ENCODE measurements at regions of chr3 and their contacts with region 1.

Region 1: GRCh38 chr3:58217209-58217811 is 6.5 kb upstream of the DNASE1L3 start:
- DNase-seq: peak; percentile 72
- ATAC-seq: peak; percentile 89
- H3K4me3 Mint-ChIP-seq: no peak overlapping the region
- H3K27ac Mint-ChIP-seq: no peak overlapping the region
- H3K4me1 Mint-ChIP-seq: peaks cover 15% of the 10 kb centered on the region
- H3K27me3 Mint-ChIP-seq: peaks cover 10% of the 10 kb centered on the region

Region 2: GRCh38 chr3:58135712-58136543 is 81.4 kb before region 1 on chr3:
- CTCF ChIA-PET with region 1: no interaction called
- POLR2A ChIA-PET with region 1: no interaction called
- DNase-seq: no peak
- ATAC-seq: no peak
- H3K4me3 Mint-ChIP-seq: no peak overlapping the region
- H3K27ac Mint-ChIP-seq: no peak overlapping the region
- H3K4me1 Mint-ChIP-seq: no peaks in the 10 kb centered on the region
- H3K27me3 Mint-ChIP-seq: no peaks in the 10 kb centered on the region

Region 3: GRCh38 chr3:58177747-58178527 is 39.4 kb before region 1 on chr3:
- CTCF ChIA-PET with region 1: interaction called, 170 read pairs
- POLR2A ChIA-PET with region 1: no interaction called
- DNase-seq: peak; percentile 91
- ATAC-seq: peak; percentile 98
- H3K4me3 Mint-ChIP-seq: peak overlapping the region; percentile 60
- H3K27ac Mint-ChIP-seq: no peak overlapping the region
- H3K4me1 Mint-ChIP-seq: peaks cover 20% of the 10 kb centered on the region
- H3K27me3 Mint-ChIP-seq: peaks cover 2% of the 10 kb centered on the region

Region 4: GRCh38 chr3:58188173-58188564 is 29.1 kb before region 1 on chr3:
- CTCF ChIA-PET with region 1: interaction called, 170 read pairs
- POLR2A ChIA-PET with region 1: no interaction called
- DNase-seq: no peak
- ATAC-seq: no peak
- H3K4me3 Mint-ChIP-seq: no peak overlapping the region
- H3K27ac Mint-ChIP-seq: no peak overlapping the region
- H3K4me1 Mint-ChIP-seq: peaks cover 2% of the 10 kb centered on the region
- H3K27me3 Mint-ChIP-seq: no peaks in the 10 kb centered on the region

Region 5: DNA sequence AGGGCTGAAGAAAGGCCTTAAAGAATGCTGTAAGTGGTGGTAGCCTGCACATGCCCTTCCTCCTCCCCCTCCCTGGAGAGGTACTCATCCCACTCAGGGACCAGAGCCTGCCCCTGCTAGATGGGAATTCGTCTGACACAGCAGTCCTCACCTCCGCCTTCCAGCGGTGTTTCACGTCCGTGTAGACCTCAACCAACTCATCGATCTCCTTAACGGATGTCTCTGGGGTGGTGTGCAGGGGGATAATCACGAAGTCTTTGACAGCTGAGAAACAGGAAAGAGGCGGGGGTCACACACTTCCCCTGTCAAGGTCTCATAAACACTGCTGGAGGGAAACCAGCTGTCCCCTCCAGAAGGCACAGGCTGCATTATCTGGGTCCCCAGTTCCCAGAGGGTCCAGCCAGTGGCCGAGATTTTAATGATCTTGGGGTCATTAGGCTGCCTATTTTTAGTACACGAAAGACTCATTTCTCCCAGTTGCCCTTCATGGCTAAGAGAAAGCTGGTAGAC is 16.4 kb before region 1 on chr3:
- CTCF ChIA-PET with region 1: interaction called, 18 read pairs
- POLR2A ChIA-PET with region 1: no interaction called
- DNase-seq: no peak
- ATAC-seq: no peak
- H3K4me3 Mint-ChIP-seq: no peak overlapping the region
- H3K27ac Mint-ChIP-seq: no peak overlapping the region
- H3K4me1 Mint-ChIP-seq: peaks cover 2% of the 10 kb centered on the region
- H3K27me3 Mint-ChIP-seq: peaks cover 14% of the 10 kb centered on the region

Region 6: DNA sequence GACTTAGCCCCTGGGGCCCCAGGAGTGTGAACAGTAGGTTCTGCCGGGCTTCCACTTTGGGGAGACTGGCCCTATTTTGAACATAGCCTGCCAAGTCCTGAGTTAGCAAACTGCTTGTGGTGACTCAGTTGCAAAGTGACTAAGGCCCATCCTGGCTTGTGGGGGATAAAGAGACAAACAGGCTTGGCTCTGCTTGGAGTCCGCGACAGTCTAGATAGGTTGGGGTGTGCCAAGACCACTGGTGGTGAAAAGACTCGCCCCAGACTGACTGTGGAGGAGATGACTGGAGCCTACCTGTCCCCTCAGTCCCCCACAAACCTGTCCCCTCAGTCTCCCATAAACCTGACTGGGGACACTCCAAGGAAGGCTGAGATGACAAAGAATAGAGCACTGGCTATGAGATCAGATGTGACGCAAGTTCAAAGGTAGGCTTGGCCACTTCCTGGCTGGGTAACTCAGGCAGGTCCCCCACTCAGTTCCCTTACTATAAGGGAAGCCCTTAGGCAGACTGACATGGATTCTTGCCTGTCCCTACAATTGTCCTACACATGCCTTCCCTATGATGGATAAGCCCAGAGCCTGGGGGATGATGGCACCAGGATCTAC is 10.8 kb before region 1 on chr3:
- CTCF ChIA-PET with region 1: interaction called, 19 read pairs
- POLR2A ChIA-PET with region 1: no interaction called
- DNase-seq: peak; percentile 32
- ATAC-seq: peak; percentile 61
- H3K4me3 Mint-ChIP-seq: no peak overlapping the region
- H3K27ac Mint-ChIP-seq: no peak overlapping the region
- H3K4me1 Mint-ChIP-seq: peaks cover 8% of the 10 kb centered on the region
- H3K27me3 Mint-ChIP-seq: peaks cover 12% of the 10 kb centered on the region

Region 7: GRCh38 chr3:58231666-58232065 is 14.4 kb after region 1 on chr3:
- CTCF ChIA-PET with region 1: interaction called, 18 read pairs
- POLR2A ChIA-PET with region 1: no interaction called
- DNase-seq: no peak
- ATAC-seq: no peak
- H3K4me3 Mint-ChIP-seq: no peak overlapping the region
- H3K27ac Mint-ChIP-seq: no peak overlapping the region
- H3K4me1 Mint-ChIP-seq: peaks cover 3% of the 10 kb centered on the region
- H3K27me3 Mint-ChIP-seq: peaks cover 51% of the 10 kb centered on the region